PC-9 (cell line): ENCODE measurements at regions of chr3 and their contacts with region 1.

Region 1: GRCh38 chr3:124467980-124468902 is 262.0 kb upstream of the UMPS start:
- DNase-seq: peak in 1 of 2 experiments; percentile 49
- H3K4me3 ChIP-seq: no peak overlapping the region
- H3K27ac ChIP-seq: no peak overlapping the region
- H3K4me1 ChIP-seq: no peaks in the 10 kb centered on the region
- H3K27me3 ChIP-seq: peaks cover 61% of the 10 kb centered on the region
- CTCF ChIP-seq: peak; percentile 92

Region 2: GRCh38 chr3:124351430-124352148 is 116.7 kb before region 1 on chr3:
- CTCF ChIA-PET with region 1: no interaction called
- POLR2A ChIA-PET with region 1: no interaction called
- intact Hi-C with region 1: loop called (anchors 1 kb)
- DNase-seq: peak in 1 of 2 experiments; percentile 21
- H3K4me3 ChIP-seq: no peak overlapping the region
- H3K27ac ChIP-seq: no peak overlapping the region
- H3K4me1 ChIP-seq: no peaks in the 10 kb centered on the region
- H3K27me3 ChIP-seq: peaks cover 25% of the 10 kb centered on the region
- CTCF ChIP-seq: peak; percentile 64

Region 3: GRCh38 chr3:124545891-124546290 is 77.7 kb after region 1 on chr3:
- CTCF ChIA-PET with region 1: no interaction called
- POLR2A ChIA-PET with region 1: no interaction called
- intact Hi-C with region 1: loop called (anchors 1 kb)
- DNase-seq: no peak
- H3K4me3 ChIP-seq: no peak overlapping the region
- H3K27ac ChIP-seq: no peak overlapping the region
- H3K4me1 ChIP-seq: no peaks in the 10 kb centered on the region
- H3K27me3 ChIP-seq: peaks cover 57% of the 10 kb centered on the region
- CTCF ChIP-seq: no peak

Region 4: GRCh38 chr3:124791639-124792151 is 323.5 kb after region 1 on chr3:
- CTCF ChIA-PET with region 1: no interaction called
- POLR2A ChIA-PET with region 1: no interaction called
- intact Hi-C with region 1: no loop called
- DNase-seq: no peak
- H3K4me3 ChIP-seq: no peak overlapping the region
- H3K27ac ChIP-seq: no peak overlapping the region
- H3K4me1 ChIP-seq: peaks cover 26% of the 10 kb centered on the region
- H3K27me3 ChIP-seq: no peaks in the 10 kb centered on the region
- CTCF ChIP-seq: no peak